Endothelial cell of umbilical vein (primary cell): ENCODE measurements at regions of chr10 and their contacts with region 1.

Region 1: GRCh38 chr10:33008499-33009243 is 50.6 kb upstream of the ITGB1 start:
- DNase-seq: peak; percentile 82
- H3K4me3 ChIP-seq: no peak overlapping the region
- H3K27ac ChIP-seq: peak overlapping the region; percentile 43
- H3K4me1 ChIP-seq: peaks cover 15% of the 10 kb centered on the region
- H3K27me3 ChIP-seq: no peaks in the 10 kb centered on the region
- CTCF ChIP-seq: peak; percentile 90 to 92
- POLR2A ChIP-seq: no peak

Region 2: GRCh38 chr10:31466313-31466712 is 1542.4 kb before region 1 on chr10:
- CTCF ChIA-PET with region 1: no interaction called
- POLR2A ChIA-PET with region 1: no interaction called
- dilution Hi-C with region 1: no loop called
- intact Hi-C with region 1: no loop called
- DNase-seq: no peak
- H3K4me3 ChIP-seq: no peak overlapping the region
- H3K27ac ChIP-seq: no peak overlapping the region
- H3K4me1 ChIP-seq: no peaks in the 10 kb centered on the region
- H3K27me3 ChIP-seq: no peaks in the 10 kb centered on the region
- CTCF ChIP-seq: no peak
- POLR2A ChIP-seq: no peak

Region 3: DNA sequence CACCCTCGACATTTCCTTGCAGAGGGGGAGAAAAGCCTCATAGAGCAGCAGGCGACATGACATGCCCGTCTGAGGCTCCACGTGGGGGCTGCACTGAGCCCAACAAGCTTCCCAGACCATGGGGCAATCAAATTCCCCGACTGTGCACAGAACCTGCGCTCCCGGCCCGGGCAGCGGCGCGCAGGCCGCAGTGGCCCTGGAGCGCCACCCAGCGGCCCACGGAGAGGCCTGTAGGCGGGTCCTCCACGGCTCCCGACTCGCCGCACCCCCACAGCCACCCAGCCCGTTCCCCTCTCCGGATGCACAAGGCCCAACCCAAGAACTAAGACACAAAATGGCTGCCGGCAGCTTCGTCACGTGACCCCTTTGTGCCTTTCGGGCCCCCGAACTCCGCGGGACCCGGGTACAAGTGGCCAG is 662.5 kb before region 1 on chr10:
- CTCF ChIA-PET with region 1: no interaction called
- POLR2A ChIA-PET with region 1: no interaction called
- dilution Hi-C with region 1: no loop called
- intact Hi-C with region 1: loop called (anchors 1 kb)
- DNase-seq: peak; percentile 96
- H3K4me3 ChIP-seq: peak overlapping the region; percentile 75 to 90 (median 89)
- H3K27ac ChIP-seq: peak overlapping the region; percentile 93
- H3K4me1 ChIP-seq: peaks cover 17% of the 10 kb centered on the region
- H3K27me3 ChIP-seq: no peaks in the 10 kb centered on the region
- CTCF ChIP-seq: peak; percentile 98 to 99
- POLR2A ChIP-seq: no peak

Region 4: DNA sequence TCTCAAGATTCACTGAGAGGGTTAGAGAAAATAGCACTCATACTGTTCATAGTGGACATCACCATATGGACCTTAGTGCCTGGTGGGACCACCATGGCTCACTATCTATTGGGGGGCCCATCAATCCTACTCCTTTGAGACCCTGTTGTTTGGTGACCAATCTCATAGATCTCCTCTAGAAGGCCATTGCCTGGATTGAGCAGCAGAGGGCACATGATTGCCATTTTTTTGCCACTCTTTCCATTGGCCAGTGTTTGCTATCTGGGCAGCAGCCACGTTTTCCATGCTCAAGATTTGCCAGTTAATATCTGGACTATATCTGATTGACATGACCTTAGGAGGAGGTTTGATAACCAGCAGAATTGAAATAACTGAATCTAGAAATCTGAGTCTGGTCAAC is 295.1 kb before region 1 on chr10:
- CTCF ChIA-PET with region 1: interaction called, 8 read pairs
- POLR2A ChIA-PET with region 1: no interaction called
- dilution Hi-C with region 1: no loop called
- intact Hi-C with region 1: loop called (anchors 2 kb)
- DNase-seq: no peak
- H3K4me3 ChIP-seq: no peak overlapping the region
- H3K27ac ChIP-seq: no peak overlapping the region
- H3K4me1 ChIP-seq: no peaks in the 10 kb centered on the region
- H3K27me3 ChIP-seq: no peaks in the 10 kb centered on the region
- CTCF ChIP-seq: peak in 1 of 2 donors; percentile 16
- POLR2A ChIP-seq: no peak

Region 5: GRCh38 chr10:32893431-32893830 is 115.2 kb before region 1 on chr10:
- CTCF ChIA-PET with region 1: interaction called, 11 read pairs
- POLR2A ChIA-PET with region 1: interaction called, 3 read pairs
- dilution Hi-C with region 1: no loop called
- intact Hi-C with region 1: loop called (anchors 5 kb)
- DNase-seq: no peak
- H3K4me3 ChIP-seq: no peak overlapping the region
- H3K27ac ChIP-seq: no peak overlapping the region
- H3K4me1 ChIP-seq: no peaks in the 10 kb centered on the region
- H3K27me3 ChIP-seq: no peaks in the 10 kb centered on the region
- CTCF ChIP-seq: no peak
- POLR2A ChIP-seq: no peak

Region 6: DNA sequence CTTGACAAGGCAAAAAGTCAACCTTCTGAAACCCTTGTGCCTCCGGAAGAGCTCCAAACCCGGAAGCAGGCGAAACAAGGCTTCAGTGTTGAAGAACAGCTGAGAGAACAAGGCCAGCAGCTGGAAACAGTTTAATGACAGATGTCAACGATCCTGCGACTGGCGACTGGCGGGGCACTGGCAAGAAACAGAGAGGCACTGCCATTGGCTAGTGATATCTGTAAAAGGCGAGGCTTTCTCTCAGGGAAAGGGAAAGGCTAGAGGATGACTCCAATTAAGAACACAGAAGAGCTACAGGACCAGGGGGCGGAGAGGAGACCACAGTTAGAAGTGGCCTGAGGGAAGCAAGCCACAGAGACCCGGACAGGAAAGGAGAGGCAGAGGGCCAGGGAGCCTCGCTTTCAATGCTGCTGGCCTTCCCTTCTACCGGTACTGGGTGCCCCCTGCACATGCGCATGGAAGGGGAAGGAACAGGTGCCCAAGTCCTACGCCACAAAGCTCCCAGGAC is 70.1 kb before region 1 on chr10:
- CTCF ChIA-PET with region 1: interaction called, 27 read pairs
- POLR2A ChIA-PET with region 1: no interaction called
- dilution Hi-C with region 1: no loop called
- intact Hi-C with region 1: loop called (anchors 1 kb)
- DNase-seq: no peak
- H3K4me3 ChIP-seq: peak overlapping the region in 1 of 3 experiments; percentile 3
- H3K27ac ChIP-seq: peak overlapping the region; percentile 53
- H3K4me1 ChIP-seq: peaks cover 49% of the 10 kb centered on the region
- H3K27me3 ChIP-seq: no peaks in the 10 kb centered on the region
- CTCF ChIP-seq: no peak
- POLR2A ChIP-seq: no peak

Region 7: GRCh38 chr10:32980558-32981468 is 27.9 kb before region 1 on chr10:
- CTCF ChIA-PET with region 1: interaction called, 31 read pairs
- POLR2A ChIA-PET with region 1: interaction called, 6 read pairs
- dilution Hi-C with region 1: no loop called
- intact Hi-C with region 1: loop called (anchors 1 kb)
- DNase-seq: peak; percentile 98
- H3K4me3 ChIP-seq: peak overlapping the region in 2 of 3 experiments; percentile 11 to 37
- H3K27ac ChIP-seq: peak overlapping the region; percentile 90
- H3K4me1 ChIP-seq: peaks cover 57% of the 10 kb centered on the region
- H3K27me3 ChIP-seq: no peaks in the 10 kb centered on the region
- CTCF ChIP-seq: no peak
- POLR2A ChIP-seq: peak; percentile 87